GM10248 (cell line): ENCODE measurements at regions of chr14 and their contacts with region 1.

Region 1: GRCh38 chr14:68491793-68492192 is 301.1 kb downstream of the ZFP36L1 start:
- DNase-seq: no peak
- CTCF ChIP-seq: no peak

Region 2: DNA sequence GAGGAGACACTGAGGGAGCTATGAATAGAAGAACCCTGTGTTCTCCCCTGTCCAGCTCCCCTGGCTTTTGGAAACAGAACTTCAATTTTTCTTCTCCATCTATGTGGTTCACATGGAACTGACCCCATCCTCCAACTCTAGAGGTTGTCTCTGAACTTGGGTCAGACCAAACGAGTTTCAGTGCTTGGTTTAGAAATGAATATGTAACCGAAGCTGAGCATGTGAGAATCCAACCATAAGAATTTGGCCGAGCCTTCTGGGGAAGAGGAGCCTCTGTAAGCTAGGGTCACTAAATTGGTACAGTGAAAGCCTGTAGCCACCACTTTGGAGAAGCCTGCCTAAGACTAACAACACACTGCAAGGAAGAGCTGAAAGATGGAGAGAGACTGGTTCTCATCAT is 163.3 kb before region 1 on chr14:
- CTCF ChIA-PET with region 1: no interaction called
- POLR2A ChIA-PET with region 1: no interaction called
- DNase-seq: peak; percentile 25
- CTCF ChIP-seq: no peak

Region 3: DNA sequence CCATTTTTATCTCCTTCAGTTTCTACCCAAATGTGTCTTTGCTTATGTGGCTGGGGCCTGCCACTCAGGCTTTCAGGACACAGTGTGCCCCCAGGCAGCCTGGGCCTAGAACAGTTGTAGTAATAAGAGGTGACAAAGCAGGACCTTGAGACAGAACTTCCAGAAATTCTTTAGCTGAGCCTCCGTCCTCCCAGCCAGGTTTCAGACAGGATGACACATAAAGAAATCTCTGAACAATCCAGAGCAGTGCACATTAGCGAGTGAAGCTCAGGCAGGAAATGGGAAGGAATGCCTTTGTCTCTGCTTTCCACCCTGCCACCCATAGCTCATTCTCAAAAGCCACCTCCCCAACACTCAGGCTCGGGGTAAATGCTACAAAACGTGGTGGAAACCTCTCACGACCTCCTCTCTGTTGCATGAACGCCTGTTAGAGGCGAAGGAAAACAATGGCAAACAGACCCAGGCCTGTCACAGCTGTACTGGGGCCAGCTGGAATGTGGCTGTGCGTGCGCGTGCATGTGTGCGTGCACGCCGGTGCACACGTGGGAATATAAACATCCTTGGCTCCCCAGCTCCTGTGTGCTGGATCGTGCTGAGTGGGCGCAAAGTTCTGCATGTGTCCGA is 14.3 kb after region 1 on chr14:
- CTCF ChIA-PET with region 1: interaction called, 13 read pairs
- POLR2A ChIA-PET with region 1: no interaction called
- DNase-seq: no peak
- CTCF ChIP-seq: no peak